Activated T-helper 1 cell treated with anti-CD3 and anti-CD28 coated beads, Interleukin-12 subunit alpha, Interleukin-12 subunit beta, Interleukin-2, Interleukin-4 antibody, amounts not matched to agents 30 ng/mL and 10 ng/mL and 1 ng/mL, durations not matched to agents 14 hours and 24 hours and 36 hours (primary cell): ENCODE measurements at regions of chr3 and their contacts with region 1.

Region 1: DNA sequence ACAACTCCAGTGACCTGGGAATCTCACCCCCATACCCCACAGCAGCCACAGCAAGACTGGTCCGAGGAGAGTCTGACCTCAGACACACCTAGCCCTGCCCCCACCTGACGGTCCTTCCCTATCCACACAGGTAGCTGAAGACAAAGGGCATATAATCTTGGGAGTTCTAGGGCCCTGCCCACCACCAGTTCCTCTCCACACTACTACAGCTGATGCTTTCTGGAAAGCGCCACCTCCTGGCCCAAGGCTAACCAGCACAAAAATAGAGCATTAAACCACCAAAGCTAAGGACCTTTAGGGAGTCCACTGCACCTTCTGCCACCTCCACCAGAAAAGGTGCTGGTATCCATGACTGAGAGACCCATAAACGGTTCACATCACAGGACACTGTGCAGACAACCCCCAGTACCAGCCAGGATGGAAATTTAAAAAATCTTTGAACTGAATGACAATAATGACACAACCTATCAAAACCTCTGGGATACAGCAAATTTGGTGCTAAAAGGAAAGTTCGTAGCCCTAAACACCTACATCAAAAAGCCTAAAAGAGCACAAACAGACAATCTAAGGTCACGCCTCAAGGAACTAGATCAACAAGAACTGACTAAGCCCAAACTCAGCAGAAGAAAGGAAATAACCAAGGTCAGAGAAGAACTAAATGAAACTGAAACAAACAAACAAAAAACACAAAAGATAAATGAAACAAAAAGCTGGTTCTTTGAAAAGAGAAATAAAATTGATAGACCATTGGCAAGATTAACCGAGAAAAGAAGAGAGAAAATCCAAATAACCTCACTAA is 122.1 kb upstream of the TPRG1 start:
- DNase-seq: peak; percentile 12
- H3K4me3 Mint-ChIP-seq: peak overlapping the region; percentile 32
- H3K27ac Mint-ChIP-seq: peak overlapping the region; percentile 83
- H3K4me1 Mint-ChIP-seq: peaks cover 55% of the 10 kb centered on the region
- H3K27me3 Mint-ChIP-seq: peaks cover 2% of the 10 kb centered on the region

Region 2: GRCh38 chr3:188916934-188917401 is 132.7 kb before region 1 on chr3:
- intact Hi-C with region 1: no loop called
- DNase-seq: peak; percentile 27
- H3K4me3 Mint-ChIP-seq: peak overlapping the region; percentile 62
- H3K27ac Mint-ChIP-seq: peak overlapping the region; percentile 84
- H3K4me1 Mint-ChIP-seq: peaks cover 46% of the 10 kb centered on the region
- H3K27me3 Mint-ChIP-seq: no peaks in the 10 kb centered on the region

Region 3: GRCh38 chr3:189013224-189013888 is 36.3 kb before region 1 on chr3:
- intact Hi-C with region 1: loop called (anchors 2 kb)
- DNase-seq: no peak
- H3K4me3 Mint-ChIP-seq: no peak overlapping the region
- H3K27ac Mint-ChIP-seq: peak overlapping the region; percentile 27
- H3K4me1 Mint-ChIP-seq: peaks cover 22% of the 10 kb centered on the region
- H3K27me3 Mint-ChIP-seq: peaks cover 23% of the 10 kb centered on the region

Region 4: DNA sequence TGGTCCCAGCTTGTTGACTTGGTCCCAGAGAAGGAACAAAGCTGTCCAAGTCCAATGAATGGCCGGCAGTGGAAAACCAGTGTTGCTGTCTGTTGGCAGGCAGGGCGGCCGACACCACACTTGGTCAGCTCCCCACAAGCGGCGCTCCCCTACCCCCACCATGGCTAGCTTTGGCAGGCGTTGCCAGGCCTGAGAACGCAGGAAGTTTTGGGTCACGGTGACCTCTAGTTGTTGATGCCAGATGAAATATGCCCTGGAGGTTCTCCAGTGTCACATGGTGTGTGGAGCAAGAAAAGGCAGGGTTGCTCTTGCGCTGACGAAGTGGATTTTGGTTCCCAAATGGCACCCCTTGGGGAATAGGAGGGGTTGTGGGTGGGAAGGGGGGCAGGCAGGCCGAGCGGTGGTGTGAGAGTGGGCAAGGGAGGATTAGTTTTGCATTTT is 49.4 kb after region 1 on chr3:
- intact Hi-C with region 1: no loop called
- DNase-seq: no peak
- H3K4me3 Mint-ChIP-seq: no peak overlapping the region
- H3K27ac Mint-ChIP-seq: no peak overlapping the region
- H3K4me1 Mint-ChIP-seq: no peaks in the 10 kb centered on the region
- H3K27me3 Mint-ChIP-seq: peaks cover 9% of the 10 kb centered on the region